ENCODE measurements at regions of chr2 and their contacts with region 1.

Region 1: DNA sequence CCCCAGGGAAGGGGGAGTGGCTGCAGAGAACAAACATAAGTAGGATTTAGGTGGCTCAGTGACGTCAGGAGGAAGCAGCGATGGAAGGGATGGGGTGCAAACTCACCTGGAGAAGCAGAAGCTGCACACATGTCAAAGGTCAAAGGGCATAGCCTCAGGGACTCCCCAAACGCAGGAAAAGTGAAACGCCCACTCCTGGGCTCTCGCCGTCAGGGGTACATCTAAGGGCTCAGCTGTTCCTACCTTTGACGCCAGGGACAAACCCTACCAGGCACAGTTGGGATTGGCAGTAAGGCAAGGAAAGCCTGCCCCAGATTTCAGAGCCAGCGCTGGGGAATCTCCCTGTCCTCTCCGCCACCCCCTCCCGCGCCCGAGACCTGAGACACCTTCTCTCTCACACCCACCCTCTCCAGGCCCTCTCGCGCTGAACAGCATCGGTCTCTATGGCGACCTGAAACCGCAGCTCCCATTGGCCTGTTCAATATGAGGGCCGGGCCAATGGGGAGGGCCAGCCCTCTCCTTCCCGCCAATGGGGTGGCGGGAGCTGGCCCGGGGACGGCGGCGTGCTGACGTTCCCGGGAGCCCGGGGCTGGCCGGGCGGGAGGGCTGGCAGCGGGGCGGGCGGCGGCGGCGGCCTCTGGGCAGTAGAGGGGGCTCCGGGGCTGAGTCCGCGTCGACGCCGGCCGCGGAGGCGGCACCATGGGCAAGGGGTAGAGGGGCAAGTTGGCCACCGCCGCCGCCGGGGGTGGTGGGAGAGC is at the starts of genes CCDC148 and PKP4:
- DNase-seq: peak; percentile 96
- H3K4me3 ChIP-seq: peak within 1 kb of the TSS; percentile 93
- H3K4me3 Mint-ChIP-seq: peak within 1 kb of the TSS; percentile 98
- H3K27ac Mint-ChIP-seq: peak within 1 kb of the TSS; percentile 97
- H3K4me1 ChIP-seq: peaks cover 24% of the 10 kb centered on the region
- H3K4me1 Mint-ChIP-seq: peaks cover 13% of the 10 kb centered on the region
- H3K27me3 ChIP-seq: no peaks in the 10 kb centered on the region
- H3K27me3 Mint-ChIP-seq: no peaks in the 10 kb centered on the region
- CTCF ChIP-seq: no peak
- total RNA-seq, gene CCDC148: 5.3 and 6.3 TPM in 2 replicates
- total RNA-seq, gene PKP4: 140 and 147 TPM in 2 replicates

Region 2: GRCh38 chr2:157221394-157221988 is 1235.0 kb before region 1 on chr2:
- CTCF ChIA-PET with region 1: no interaction called
- POLR2A ChIA-PET with region 1: no interaction called
- intact Hi-C with region 1: no loop called
- DNase-seq: no peak
- H3K4me3 ChIP-seq: no peak overlapping the region
- H3K4me3 Mint-ChIP-seq: no peak overlapping the region
- H3K27ac Mint-ChIP-seq: no peak overlapping the region
- H3K4me1 ChIP-seq: no peaks in the 10 kb centered on the region
- H3K4me1 Mint-ChIP-seq: no peaks in the 10 kb centered on the region
- H3K27me3 ChIP-seq: no peaks in the 10 kb centered on the region
- H3K27me3 Mint-ChIP-seq: no peaks in the 10 kb centered on the region
- CTCF ChIP-seq: no peak

Region 3: DNA sequence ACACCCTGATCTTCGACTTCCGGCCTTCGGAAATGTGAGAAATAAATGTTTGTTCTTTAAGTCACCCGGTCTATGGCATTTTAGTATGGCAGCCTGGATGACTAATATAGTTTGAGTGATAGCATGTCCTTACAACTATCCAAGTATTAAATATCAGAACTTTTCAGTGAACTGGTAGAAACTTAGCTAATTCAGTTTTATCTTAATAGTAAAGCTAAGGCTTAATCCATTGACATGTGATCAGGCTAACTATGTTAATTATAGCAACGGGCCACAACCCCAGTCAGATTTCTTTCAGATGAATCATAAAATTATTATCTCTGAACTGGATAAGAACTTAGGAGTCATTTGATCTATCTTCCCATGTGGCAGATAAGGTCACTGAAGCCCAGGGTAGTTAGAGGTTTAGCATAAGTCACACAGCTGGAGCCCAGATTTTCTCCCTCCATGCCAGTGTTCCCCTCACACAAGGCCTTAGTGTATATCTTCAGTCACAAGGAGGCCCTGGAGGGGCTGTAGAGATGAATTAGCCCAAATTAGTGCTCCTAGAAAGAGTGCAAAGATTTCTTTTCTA is 395.5 kb before region 1 on chr2:
- CTCF ChIA-PET with region 1: no interaction called
- POLR2A ChIA-PET with region 1: no interaction called
- intact Hi-C with region 1: no loop called
- DNase-seq: no peak
- H3K4me3 ChIP-seq: no peak overlapping the region
- H3K4me3 Mint-ChIP-seq: no peak overlapping the region
- H3K27ac Mint-ChIP-seq: no peak overlapping the region
- H3K4me1 ChIP-seq: peaks cover 20% of the 10 kb centered on the region
- H3K4me1 Mint-ChIP-seq: peaks cover 13% of the 10 kb centered on the region
- H3K27me3 ChIP-seq: no peaks in the 10 kb centered on the region; the same call in 1 of the 2 replicates
- H3K27me3 Mint-ChIP-seq: no peaks in the 10 kb centered on the region
- CTCF ChIP-seq: no peak

Region 4: DNA sequence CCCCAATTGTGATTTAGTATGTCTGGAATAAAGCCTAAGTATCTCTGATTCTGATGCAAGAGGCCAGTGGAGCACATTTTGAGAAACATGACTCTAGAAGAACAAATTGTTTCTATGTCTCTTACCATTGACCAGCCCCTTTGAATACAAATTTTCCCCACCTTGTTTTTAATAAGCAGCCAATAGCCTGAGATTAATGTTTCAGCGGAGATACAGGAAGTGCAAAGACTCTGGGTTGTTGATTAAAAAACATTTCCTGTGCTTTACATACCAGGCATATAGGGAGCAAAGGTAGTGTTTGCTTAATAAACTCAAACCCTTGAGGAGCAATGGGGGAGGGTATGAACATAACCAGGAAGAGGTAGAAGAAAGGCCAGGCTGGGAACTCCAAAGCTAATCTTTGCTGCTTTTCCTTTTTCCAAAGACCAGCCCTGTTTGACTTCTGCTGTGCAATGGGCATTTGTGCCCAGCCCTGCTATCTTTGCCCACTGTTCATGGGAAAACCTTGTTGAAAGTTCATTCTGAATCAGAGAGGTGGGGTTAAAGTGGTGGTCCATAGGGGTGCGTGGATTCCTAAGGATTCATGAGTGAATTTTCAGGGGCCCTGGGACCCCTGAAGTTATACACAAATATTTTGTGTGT is 325.5 kb before region 1 on chr2:
- CTCF ChIA-PET with region 1: no interaction called
- POLR2A ChIA-PET with region 1: interaction called, 3 read pairs
- intact Hi-C with region 1: loop called (anchors 5 kb)
- DNase-seq: peak; percentile 63 to 76
- H3K4me3 ChIP-seq: no peak overlapping the region
- H3K4me3 Mint-ChIP-seq: peak overlapping the region; percentile 57
- H3K27ac Mint-ChIP-seq: peak overlapping the region; percentile 85
- H3K4me1 ChIP-seq: peaks cover 72% of the 10 kb centered on the region
- H3K4me1 Mint-ChIP-seq: peaks cover 42% of the 10 kb centered on the region
- H3K27me3 ChIP-seq: no peaks in the 10 kb centered on the region
- H3K27me3 Mint-ChIP-seq: no peaks in the 10 kb centered on the region
- CTCF ChIP-seq: no peak

Region 5: DNA sequence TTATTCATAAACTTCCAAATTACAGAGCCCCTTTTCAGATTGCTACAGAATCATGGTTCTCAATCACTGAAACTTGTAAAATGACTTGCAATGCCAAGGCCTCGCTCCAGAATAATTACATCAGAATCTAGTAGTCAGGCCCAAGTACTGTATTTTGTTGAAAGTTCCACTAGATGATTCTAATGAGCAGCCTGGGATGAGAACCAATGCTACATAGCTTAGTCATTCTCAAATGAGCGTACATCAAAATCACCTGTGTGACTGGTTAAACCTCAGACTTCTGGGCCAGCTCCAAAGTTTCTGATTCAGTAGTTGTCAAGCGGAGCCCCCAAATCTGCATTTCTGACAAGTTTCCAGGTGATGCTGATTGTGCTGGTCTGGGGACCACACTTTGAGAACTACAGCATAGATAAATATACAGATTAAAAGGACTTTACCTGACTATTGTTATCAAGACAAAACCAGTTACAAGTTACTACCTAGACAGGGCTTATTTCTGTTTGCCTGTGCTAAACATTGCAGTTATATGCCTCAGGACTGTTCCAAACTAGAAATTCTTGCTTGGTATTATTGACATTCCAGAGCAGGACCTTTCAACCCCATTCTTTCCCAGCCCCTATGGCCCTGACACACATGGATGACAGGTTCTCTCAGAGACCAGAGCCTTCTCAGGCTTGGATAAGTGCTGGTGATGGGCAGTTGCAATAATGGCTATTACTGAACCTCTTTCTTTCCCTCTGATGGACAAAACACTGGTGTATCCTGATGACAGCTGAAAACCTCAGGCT is 271.7 kb before region 1 on chr2:
- CTCF ChIA-PET with region 1: interaction called, 3 read pairs
- POLR2A ChIA-PET with region 1: no interaction called
- intact Hi-C with region 1: loop called (anchors 2 kb)
- DNase-seq: peak; percentile 86 to 87
- H3K4me3 ChIP-seq: no peak overlapping the region
- H3K4me3 Mint-ChIP-seq: no peak overlapping the region
- H3K27ac Mint-ChIP-seq: peak overlapping the region; percentile 31
- H3K4me1 ChIP-seq: peaks cover 38% of the 10 kb centered on the region
- H3K4me1 Mint-ChIP-seq: peaks cover 37% of the 10 kb centered on the region
- H3K27me3 ChIP-seq: no peaks in the 10 kb centered on the region
- H3K27me3 Mint-ChIP-seq: no peaks in the 10 kb centered on the region
- CTCF ChIP-seq: no peak

Region 6: DNA sequence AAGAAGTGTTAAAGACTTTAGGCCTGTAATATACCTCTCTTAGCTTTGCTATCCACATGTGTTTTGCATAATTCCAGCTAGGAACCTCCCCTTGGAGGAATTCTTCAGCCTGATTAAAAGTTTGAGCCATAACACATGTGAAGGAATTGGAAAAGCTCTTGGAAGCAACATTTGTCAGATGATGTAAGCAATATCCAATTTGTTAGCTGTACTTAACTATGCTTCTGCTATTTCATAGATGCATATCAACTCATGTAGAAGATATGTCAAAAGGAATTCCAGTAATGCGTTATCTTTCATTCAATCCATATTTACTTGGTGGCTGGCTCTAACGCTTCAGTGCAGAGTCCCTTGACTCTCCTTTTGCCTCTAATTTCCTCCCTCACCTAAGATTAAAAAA is 46.5 kb after region 1 on chr2:
- CTCF ChIA-PET with region 1: interaction called, 5 read pairs
- POLR2A ChIA-PET with region 1: interaction called, 5 read pairs
- intact Hi-C with region 1: loop called (anchors 1 kb)
- DNase-seq: no peak
- H3K4me3 ChIP-seq: no peak overlapping the region
- H3K4me3 Mint-ChIP-seq: no peak overlapping the region
- H3K27ac Mint-ChIP-seq: peak overlapping the region; percentile 64
- H3K4me1 ChIP-seq: peaks cover 44% of the 10 kb centered on the region
- H3K4me1 Mint-ChIP-seq: peaks cover 33% of the 10 kb centered on the region
- H3K27me3 ChIP-seq: no peaks in the 10 kb centered on the region
- H3K27me3 Mint-ChIP-seq: no peaks in the 10 kb centered on the region
- CTCF ChIP-seq: no peak

Region 7: DNA sequence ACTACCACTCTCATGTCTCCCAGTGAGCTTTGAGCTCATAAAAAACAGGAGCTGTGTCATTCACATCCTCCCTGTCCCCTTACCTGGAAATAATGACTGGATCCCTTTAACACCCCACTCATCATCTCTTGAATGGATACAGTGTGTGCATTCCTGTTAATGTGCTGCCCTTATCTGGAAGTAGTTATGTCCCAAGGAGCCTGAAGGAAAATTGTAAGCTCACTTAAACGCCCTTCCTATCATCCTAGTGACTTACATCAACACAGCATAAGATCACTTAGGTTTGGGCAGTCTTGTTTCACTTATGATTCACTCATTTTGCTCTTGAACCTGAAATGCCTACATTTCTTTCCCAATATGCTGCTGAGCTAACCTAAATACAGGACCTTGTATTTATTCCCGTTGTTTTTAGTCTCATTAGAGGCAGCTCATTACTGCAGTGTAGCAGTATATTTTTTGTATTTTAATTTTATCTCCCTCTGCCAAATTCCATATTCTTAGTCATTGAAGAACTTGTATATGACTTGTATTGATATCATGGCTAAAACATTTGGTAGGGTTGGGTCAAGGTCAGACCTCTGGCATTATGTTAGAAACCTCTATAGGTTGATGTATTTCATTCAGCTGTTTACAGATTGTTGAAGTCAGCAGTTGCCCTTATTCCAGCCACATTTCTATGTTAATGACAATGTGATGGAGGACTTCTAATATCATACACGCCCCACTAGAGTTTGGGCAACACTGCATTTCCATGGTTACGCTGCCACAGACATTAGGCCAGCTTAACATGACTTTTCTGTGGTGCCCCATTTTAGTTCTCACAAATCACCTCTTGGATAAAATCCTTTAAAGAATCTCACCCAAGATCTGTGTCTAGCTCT is 73.1 kb after region 1 on chr2:
- CTCF ChIA-PET with region 1: interaction called, 3 read pairs
- POLR2A ChIA-PET with region 1: no interaction called
- intact Hi-C with region 1: loop called (anchors 2 kb)
- DNase-seq: no peak
- H3K4me3 ChIP-seq: no peak overlapping the region
- H3K4me3 Mint-ChIP-seq: no peak overlapping the region
- H3K27ac Mint-ChIP-seq: peak overlapping the region; percentile 60
- H3K4me1 ChIP-seq: no peaks in the 10 kb centered on the region
- H3K4me1 Mint-ChIP-seq: peaks cover 8% of the 10 kb centered on the region
- H3K27me3 ChIP-seq: no peaks in the 10 kb centered on the region
- H3K27me3 Mint-ChIP-seq: no peaks in the 10 kb centered on the region
- CTCF ChIP-seq: no peak

Region 8: DNA sequence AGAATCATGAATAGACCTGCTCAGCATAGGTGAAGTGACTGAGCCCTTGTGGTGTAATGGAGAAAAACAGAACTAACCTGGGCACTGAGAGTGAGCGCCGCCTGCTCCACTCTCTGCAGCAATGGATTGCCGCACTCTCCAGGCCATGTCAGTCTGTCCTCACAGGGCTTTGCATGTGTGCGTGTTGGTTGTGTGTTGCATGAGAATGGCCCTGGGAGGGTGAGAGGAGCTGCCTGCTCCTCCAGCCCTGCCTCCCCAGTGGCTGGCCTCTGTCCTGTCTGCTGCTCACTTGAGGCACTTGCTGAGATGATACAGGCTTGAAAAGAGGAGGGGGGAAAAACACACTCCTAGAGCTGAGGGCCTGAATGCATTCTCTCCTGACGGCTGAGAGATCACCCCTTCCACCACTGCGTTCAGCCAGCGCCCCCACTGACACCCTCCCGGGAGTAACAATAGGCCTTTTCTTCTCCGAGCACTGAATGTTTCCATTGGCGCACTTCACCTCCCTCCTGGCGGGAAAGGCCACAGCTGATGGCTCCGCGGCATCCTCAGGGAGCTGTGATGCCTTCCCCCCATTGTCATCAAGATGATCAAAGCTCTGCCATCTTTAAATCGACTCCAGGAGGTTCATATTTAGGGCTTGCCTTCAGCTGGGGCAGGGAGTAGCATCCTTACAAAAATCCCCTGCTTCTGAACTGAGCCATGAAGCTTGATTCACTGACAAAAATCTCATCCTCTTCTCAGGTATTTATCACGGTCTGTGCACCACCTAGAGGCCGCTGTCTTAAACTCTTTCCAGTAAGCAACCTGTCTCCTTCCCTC is 288.8 kb after region 1 on chr2:
- CTCF ChIA-PET with region 1: interaction called, 3 read pairs
- POLR2A ChIA-PET with region 1: interaction called, 7 read pairs
- intact Hi-C with region 1: loop called (anchors 1 kb)
- DNase-seq: peak in 1 of 2 experiments; percentile 67
- H3K4me3 ChIP-seq: no peak overlapping the region
- H3K4me3 Mint-ChIP-seq: no peak overlapping the region
- H3K27ac Mint-ChIP-seq: no peak overlapping the region
- H3K4me1 ChIP-seq: no peaks in the 10 kb centered on the region
- H3K4me1 Mint-ChIP-seq: peaks cover 4% of the 10 kb centered on the region
- H3K27me3 ChIP-seq: no peaks in the 10 kb centered on the region
- H3K27me3 Mint-ChIP-seq: no peaks in the 10 kb centered on the region
- CTCF ChIP-seq: peak; percentile 73 to 75

Measured in Caco-2 (cell line).